Testis (tissue), 5 donors: ENCODE measurements at regions of chr3 and their contacts with region 1.

Region 1: DNA sequence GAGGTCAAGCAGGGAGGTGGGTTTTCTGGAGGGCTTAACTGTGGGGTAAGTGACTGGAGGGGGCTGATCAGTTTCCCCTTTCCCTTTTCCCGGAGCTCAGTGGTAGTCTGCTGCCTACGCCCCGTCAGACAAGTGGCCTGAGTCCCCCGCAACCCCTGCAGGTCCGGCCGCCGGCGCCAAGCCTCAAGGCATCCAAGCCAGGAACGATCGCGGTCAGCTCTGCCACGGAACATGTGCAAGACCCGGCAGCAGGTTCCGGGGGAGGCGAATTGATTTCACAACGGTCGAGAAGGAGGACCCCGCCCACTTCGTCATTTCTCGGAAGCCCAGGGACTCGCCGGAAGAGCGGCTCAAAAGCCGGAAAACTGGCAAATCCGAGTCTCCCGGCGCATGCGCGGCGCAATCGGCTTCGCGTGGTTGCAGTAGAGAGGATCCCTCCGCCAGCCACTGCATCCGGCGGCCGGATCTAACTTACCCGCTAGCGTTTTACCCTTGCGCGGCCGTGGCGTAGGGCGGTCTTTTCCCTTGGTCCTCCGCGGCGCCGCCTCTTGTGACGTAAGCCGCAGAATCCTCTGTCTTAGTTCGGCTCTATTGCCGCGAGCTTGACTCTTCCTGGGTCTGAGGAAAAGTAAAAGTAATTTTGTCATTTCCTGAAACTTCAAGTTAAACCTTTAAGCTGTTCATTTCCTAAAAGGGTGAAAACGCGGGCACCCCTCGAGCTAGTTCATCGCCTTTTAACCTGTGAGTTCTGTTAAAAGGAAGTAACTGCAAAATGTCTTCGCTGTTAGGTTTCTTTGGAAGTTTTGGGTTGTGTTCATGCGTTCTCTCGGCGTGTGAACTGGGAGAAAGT is 14.9 kb upstream of the CCNL1 start:
- DNase-seq: peak; percentile 99
- H3K4me3 ChIP-seq: peak overlapping the region; percentile 57 to 67
- H3K27ac ChIP-seq: peak overlapping the region; percentile 93 to 98
- H3K4me1 ChIP-seq: peaks cover 21% of the 10 kb centered on the region
- H3K27me3 ChIP-seq: no peaks in the 10 kb centered on the region
- CTCF ChIP-seq: peak in 1 of 3 experiments; percentile 40
- POLR2A ChIP-seq: peak; percentile 50

Region 2: DNA sequence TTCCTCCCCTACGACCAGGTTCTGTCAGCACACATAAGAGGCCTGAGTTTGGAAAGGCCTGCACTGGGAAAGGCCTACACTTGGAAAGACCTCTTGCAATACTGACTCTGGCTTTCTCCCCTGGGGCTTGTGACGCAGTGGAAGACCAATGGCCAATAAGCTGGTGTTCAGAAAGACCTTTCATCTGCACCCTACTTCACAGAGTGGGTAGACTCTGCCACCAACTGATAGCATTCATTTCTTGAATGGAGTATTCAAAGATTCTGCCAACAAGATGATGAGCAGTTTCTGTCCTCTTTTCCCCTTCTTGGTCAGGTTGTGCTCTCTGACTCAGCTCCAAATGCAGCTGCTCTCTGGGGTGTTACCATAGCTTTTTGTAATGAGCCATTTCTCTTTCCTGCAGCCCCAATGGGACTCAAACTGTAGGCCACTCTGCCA is 451.7 kb before region 1 on chr3:
- intact Hi-C with region 1: no loop called
- DNase-seq: no peak
- H3K4me3 ChIP-seq: no peak overlapping the region
- H3K27ac ChIP-seq: no peak overlapping the region
- H3K4me1 ChIP-seq: no peaks in the 10 kb centered on the region
- H3K27me3 ChIP-seq: no peaks in the 10 kb centered on the region
- CTCF ChIP-seq: no peak
- POLR2A ChIP-seq: no peak

Region 3: GRCh38 chr3:157159762-157160657 is 14.9 kb before region 1 on chr3 and contains the start of gene CCNL1:
- intact Hi-C with region 1: loop called (anchors 2 kb)
- DNase-seq: peak; percentile 97
- H3K4me3 ChIP-seq: peak within 1 kb of the TSS; percentile 100
- H3K27ac ChIP-seq: peak within 1 kb of the TSS; percentile 100
- H3K4me1 ChIP-seq: peaks cover 42% of the 10 kb centered on the region
- H3K27me3 ChIP-seq: no peaks in the 10 kb centered on the region
- CTCF ChIP-seq: no peak
- POLR2A ChIP-seq: peak; percentile 97
- total RNA-seq, gene CCNL1: 168 to 200 TPM

Region 4: GRCh38 chr3:157300094-157300493 is 125.2 kb after region 1 on chr3:
- intact Hi-C with region 1: no loop called
- DNase-seq: no peak
- H3K4me3 ChIP-seq: no peak overlapping the region
- H3K27ac ChIP-seq: no peak overlapping the region
- H3K4me1 ChIP-seq: no peaks in the 10 kb centered on the region
- H3K27me3 ChIP-seq: no peaks in the 10 kb centered on the region
- CTCF ChIP-seq: no peak
- POLR2A ChIP-seq: no peak